IMR-90 (cell line): ENCODE measurements at regions of chr18 and their contacts with region 1.

Region 1: GRCh38 chr18:49412679-49413078 is 47.8 kb downstream of the DYM start:
- DNase-seq: no peak
- ATAC-seq: no peak
- H3K4me3 ChIP-seq: no peak overlapping the region
- H3K27ac ChIP-seq: no peak overlapping the region
- H3K4me1 ChIP-seq: peaks cover 3% of the 10 kb centered on the region; the same call in 1 of the 2 replicates
- H3K27me3 ChIP-seq: no peaks in the 10 kb centered on the region
- CTCF ChIP-seq: no peak
- POLR2A ChIP-seq: no peak
- RAD21 ChIP-seq: no peak

Region 2: DNA sequence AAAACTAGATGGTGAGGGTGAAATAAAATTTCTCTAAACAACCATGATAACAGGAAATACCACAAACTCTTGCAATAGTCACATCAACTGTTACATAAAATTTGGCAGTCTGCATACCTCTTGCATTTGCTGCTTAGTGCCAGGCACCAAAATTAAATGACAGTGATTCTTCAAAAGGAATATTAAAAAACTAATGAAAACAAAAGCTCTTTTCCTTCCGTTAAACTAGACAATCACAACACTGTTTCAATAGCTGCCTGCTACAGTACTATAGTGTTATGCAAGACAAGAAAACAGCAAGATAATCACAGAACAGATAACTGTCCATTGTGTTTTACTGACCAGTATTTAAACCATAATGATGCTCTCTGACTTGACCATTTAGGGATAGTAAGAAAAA is 222.9 kb before region 1 on chr18:
- CTCF ChIA-PET with region 1: no interaction called
- POLR2A ChIA-PET with region 1: no interaction called
- dilution Hi-C with region 1: no loop called
- in situ Hi-C with region 1: no loop called
- intact Hi-C with region 1: loop called (anchors 10 kb)
- DNase-seq: no peak
- ATAC-seq: peak; percentile 49
- H3K4me3 ChIP-seq: no peak overlapping the region
- H3K27ac ChIP-seq: no peak overlapping the region
- H3K4me1 ChIP-seq: peaks cover 2% of the 10 kb centered on the region
- H3K27me3 ChIP-seq: no peaks in the 10 kb centered on the region
- CTCF ChIP-seq: no peak
- POLR2A ChIP-seq: no peak
- RAD21 ChIP-seq: no peak

Region 3: GRCh38 chr18:49250816-49251388 is 161.8 kb before region 1 on chr18:
- CTCF ChIA-PET with region 1: interaction called, 3 read pairs
- POLR2A ChIA-PET with region 1: interaction called, 3 read pairs
- dilution Hi-C with region 1: no loop called
- in situ Hi-C with region 1: loop called (anchors 10 kb)
- intact Hi-C with region 1: loop called (anchors 1 kb)
- DNase-seq: peak; percentile 47
- ATAC-seq: peak; percentile 69; the same call in 1 of the 2 replicates
- H3K4me3 ChIP-seq: no peak overlapping the region
- H3K27ac ChIP-seq: no peak overlapping the region
- H3K4me1 ChIP-seq: peaks cover 4% of the 10 kb centered on the region
- H3K27me3 ChIP-seq: no peaks in the 10 kb centered on the region
- CTCF ChIP-seq: peak; percentile 58
- POLR2A ChIP-seq: no peak
- RAD21 ChIP-seq: peak; percentile 71

Region 4: GRCh38 chr18:49898421-49898820 is 485.7 kb after region 1 on chr18:
- CTCF ChIA-PET with region 1: no interaction called
- POLR2A ChIA-PET with region 1: no interaction called
- dilution Hi-C with region 1: no loop called
- in situ Hi-C with region 1: no loop called
- intact Hi-C with region 1: no loop called
- DNase-seq: peak; percentile 69
- ATAC-seq: peak; percentile 70
- H3K4me3 ChIP-seq: no peak overlapping the region
- H3K27ac ChIP-seq: no peak overlapping the region
- H3K4me1 ChIP-seq: no peaks in the 10 kb centered on the region
- H3K27me3 ChIP-seq: peaks cover 5% of the 10 kb centered on the region; the same call in 1 of the 2 replicates
- CTCF ChIP-seq: no peak
- POLR2A ChIP-seq: no peak
- RAD21 ChIP-seq: no peak